ENCODE measurements at regions of chr3 and their contacts with region 1.

Region 1: GRCh38 chr3:151434151-151434890 is 26.5 kb downstream of the IGSF10 start:
- DNase-seq: no peak
- H3K4me3 ChIP-seq: no peak overlapping the region
- H3K27ac ChIP-seq: peak overlapping the region in 1 of 2 experiments; percentile 76; a peak in 2 of 4 replicates
- H3K4me1 ChIP-seq: peaks cover 0 to 4% of the 10 kb centered on the region in 2 experiments; a peak in 1 of 4 replicates
- H3K27me3 ChIP-seq: no peaks in the 10 kb centered on the region
- CTCF ChIP-seq: no peak
- EP300 ChIP-seq: no peak
- RAD21 ChIP-seq: no peak

Region 2: DNA sequence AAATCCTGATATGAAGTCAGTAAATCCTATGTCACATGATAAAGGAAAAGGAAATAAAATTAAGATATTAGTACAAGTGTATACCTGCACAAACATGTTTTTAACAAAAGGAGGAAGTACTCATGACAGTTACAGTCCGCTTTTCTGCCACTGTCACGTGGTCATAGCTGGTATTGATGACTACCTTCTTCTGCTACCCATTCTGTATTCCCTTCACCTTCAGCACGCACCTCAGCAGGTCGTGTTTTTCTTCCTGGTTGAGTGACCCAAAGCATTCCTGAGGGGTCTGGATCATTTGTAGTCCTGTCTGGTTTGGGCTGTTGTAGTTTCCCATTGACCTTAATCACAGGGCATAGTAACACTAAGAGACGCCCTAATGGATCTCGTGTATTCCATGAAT is 14.5 kb before region 1 on chr3:
- CTCF ChIA-PET with region 1: no interaction called
- POLR2A ChIA-PET with region 1: no interaction called
- DNase-seq: no peak
- H3K4me3 ChIP-seq: no peak overlapping the region
- H3K27ac ChIP-seq: no peak overlapping the region
- H3K4me1 ChIP-seq: no peaks in the 10 kb centered on the region
- H3K27me3 ChIP-seq: no peaks in the 10 kb centered on the region
- CTCF ChIP-seq: no peak
- EP300 ChIP-seq: no peak
- RAD21 ChIP-seq: no peak

Region 3: DNA sequence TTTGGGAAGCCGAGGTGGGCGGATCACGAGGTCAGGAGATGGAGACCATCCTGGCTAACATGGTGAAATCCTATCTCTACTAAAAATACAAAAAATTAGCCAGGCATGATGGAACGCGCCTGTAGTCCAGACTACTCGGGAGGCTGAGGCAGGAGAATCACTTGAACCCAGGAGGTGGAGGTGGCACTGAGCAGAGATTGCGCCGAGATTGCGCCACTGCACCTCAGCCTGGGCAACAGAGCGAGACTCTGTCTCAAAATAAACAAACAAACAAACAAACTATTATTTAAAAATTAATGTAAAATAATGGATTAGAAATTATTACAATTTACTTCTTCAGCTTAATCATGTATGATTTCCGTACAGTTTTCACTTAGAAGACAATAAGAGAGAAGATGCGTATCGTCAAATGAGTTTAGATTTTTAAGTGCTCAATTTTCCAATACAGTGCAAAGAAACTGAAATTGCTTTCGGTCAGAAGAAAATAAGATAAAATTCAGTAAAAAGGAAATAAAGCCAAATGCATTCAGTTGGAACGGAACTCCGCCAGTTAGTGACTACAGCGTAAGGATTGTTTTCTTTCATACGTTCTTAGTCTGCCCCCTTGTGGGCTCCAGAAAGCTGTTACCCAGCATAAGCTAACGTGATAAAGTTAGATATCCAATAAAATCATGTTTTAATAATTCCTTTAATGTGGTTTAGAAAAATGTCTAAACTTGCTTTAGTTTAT is 404.4 kb after region 1 on chr3:
- CTCF ChIA-PET with region 1: interaction called, 45 read pairs
- POLR2A ChIA-PET with region 1: no interaction called
- DNase-seq: peak; percentile 31
- H3K4me3 ChIP-seq: peak overlapping the region in 1 of 2 experiments; percentile 45; a peak in 1 of 4 replicates
- H3K27ac ChIP-seq: peak overlapping the region in 1 of 2 experiments; percentile 84; a peak in 2 of 4 replicates
- H3K4me1 ChIP-seq: peaks cover 0 to 26% of the 10 kb centered on the region in 2 experiments
- H3K27me3 ChIP-seq: no peaks in the 10 kb centered on the region
- CTCF ChIP-seq: peak; percentile 90
- EP300 ChIP-seq: no peak
- RAD21 ChIP-seq: peak; percentile 89